Activated naive CD4-positive, alpha-beta T cell treated with anti-CD3 and anti-CD28 coated beads for 36 hours (primary cell): ENCODE measurements at regions of chr10 and their contacts with region 1.

Region 1: GRCh38 chr10:80472234-80473095 is 18.4 kb downstream of the TSPAN14 start:
- DNase-seq: peak; percentile 75
- H3K4me3 Mint-ChIP-seq: peak overlapping the region; percentile 36
- H3K27ac Mint-ChIP-seq: peak overlapping the region; percentile 98
- H3K4me1 Mint-ChIP-seq: peaks cover 87% of the 10 kb centered on the region
- H3K27me3 Mint-ChIP-seq: no peaks in the 10 kb centered on the region

Region 2: GRCh38 chr10:79203833-79204232 is 1268.6 kb before region 1 on chr10:
- CTCF ChIA-PET with region 1: no interaction called
- intact Hi-C with region 1: no loop called
- DNase-seq: no peak
- H3K4me3 Mint-ChIP-seq: no peak overlapping the region
- H3K27ac Mint-ChIP-seq: no peak overlapping the region
- H3K4me1 Mint-ChIP-seq: no peaks in the 10 kb centered on the region
- H3K27me3 Mint-ChIP-seq: no peaks in the 10 kb centered on the region

Region 3: GRCh38 chr10:79331709-79332108 is 1140.8 kb before region 1 on chr10:
- CTCF ChIA-PET with region 1: no interaction called
- intact Hi-C with region 1: loop called (anchors 10 kb)
- DNase-seq: peak; percentile 95
- H3K4me3 Mint-ChIP-seq: peak overlapping the region; percentile 28
- H3K27ac Mint-ChIP-seq: peak overlapping the region; percentile 93
- H3K4me1 Mint-ChIP-seq: peaks cover 43% of the 10 kb centered on the region
- H3K27me3 Mint-ChIP-seq: no peaks in the 10 kb centered on the region

Region 4: DNA sequence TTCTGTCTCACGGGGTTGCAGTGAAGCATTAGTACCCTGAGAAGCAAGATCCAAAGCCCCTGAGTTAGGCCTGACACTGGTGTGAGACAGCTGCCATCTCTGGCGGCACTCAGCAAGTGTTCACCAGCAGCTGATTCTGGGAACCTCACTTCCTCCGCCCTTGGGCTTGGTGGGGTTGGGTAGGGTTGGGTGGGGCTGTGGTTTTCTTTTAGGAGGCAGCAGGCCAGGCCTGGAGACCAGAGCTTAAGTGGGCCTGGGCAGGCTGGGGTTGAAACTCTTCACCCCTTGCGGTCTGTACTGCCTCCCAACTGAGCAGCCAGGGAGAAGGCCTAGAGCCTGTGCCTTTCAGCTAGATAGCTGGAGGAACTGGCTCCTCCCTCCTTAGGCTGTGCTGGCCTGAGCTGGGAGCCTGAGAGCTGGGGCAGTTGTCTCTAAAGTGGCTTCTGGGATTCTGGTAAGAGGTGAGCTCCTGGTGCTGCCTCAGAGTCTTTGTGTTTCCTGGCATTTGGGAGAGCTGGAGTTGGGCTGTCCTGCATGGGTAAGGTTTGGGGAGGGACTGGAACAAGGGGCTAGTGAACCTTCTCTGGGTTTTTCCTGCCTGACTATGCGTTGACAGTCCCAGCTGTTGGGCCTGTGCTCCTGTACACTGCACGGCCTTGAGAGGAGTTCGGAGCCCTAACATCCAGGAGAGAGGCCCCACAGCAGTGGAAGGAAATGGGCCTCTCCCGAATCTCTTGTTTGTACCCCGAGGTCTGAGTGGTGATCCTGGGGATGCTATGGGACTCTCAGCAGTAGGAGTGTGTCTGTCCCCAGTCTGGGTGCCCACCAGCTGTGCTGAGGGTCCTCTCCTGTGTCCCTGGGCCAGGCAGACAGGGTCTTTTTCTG is 13.2 kb before region 1 on chr10:
- CTCF ChIA-PET with region 1: interaction called, 74 read pairs
- intact Hi-C with region 1: loop called (anchors 1 kb)
- DNase-seq: peak; percentile 83
- H3K4me3 Mint-ChIP-seq: peak overlapping the region; percentile 76
- H3K27ac Mint-ChIP-seq: peak overlapping the region; percentile 93
- H3K4me1 Mint-ChIP-seq: peaks cover 82% of the 10 kb centered on the region
- H3K27me3 Mint-ChIP-seq: no peaks in the 10 kb centered on the region

Region 5: DNA sequence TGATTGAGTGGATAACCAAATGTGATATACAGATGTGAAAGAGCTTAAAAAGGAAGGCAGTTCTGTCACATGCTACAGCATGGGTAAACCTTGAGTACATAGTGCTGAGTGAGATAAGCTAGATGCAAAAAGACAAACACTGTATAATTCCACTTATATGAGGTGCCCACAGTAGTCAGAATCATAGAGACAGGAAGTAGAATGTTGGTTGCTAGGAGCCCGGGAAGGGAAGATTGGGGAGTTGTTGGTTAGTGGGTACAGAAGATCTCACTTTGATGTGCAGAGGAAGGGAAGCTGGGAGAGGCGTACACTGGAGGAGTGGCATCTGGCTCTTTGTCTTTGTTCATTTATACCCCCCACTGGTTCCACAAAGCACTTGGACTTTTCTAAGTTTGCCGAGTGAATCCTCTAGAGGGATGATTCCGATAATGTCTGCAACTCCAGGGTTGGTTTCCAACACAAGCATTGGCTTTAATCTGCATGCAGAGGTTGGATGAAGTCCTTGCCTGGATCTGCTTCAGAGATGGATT is 21.1 kb after region 1 on chr10:
- CTCF ChIA-PET with region 1: interaction called, 237 read pairs
- intact Hi-C with region 1: loop called (anchors 1 kb)
- DNase-seq: peak; percentile 49
- H3K4me3 Mint-ChIP-seq: peak overlapping the region; percentile 27
- H3K27ac Mint-ChIP-seq: peak overlapping the region; percentile 85
- H3K4me1 Mint-ChIP-seq: peaks cover 99% of the 10 kb centered on the region
- H3K27me3 Mint-ChIP-seq: no peaks in the 10 kb centered on the region

Region 6: DNA sequence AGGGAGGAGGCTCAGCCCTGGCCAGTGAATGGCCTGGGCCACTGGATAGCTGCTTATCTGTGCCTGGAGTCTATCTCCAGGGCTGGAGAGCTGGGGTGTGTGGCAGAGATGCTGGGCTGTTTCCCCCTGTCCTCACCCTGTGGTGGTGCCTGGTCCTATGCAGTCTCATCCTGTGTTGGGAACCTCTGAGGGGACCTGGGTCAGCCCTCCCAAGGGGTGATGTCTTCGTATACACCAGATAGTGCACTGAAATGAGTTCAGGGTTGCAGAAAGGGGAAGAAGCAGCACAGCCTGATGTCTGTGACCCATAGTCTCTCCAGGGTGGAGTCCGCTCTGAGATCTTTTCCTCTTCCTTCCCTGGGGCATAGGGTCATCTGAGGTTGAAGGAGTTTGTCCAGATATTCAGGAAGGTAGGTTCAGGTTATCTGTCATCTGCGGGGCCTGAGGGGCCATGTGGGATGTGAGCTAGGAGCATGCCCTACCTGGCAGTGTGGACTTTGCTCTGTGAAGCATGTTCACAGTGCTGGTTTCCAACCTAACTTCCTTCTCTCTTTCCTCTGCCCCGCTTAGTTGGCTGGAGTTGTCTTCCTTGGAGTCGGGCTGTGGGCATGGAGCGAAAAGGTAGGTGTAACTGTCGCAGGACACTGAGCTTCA is 31.8 kb after region 1 on chr10:
- CTCF ChIA-PET with region 1: interaction called, 237 read pairs
- intact Hi-C with region 1: loop called (anchors 1 kb)
- DNase-seq: no peak
- H3K4me3 Mint-ChIP-seq: no peak overlapping the region
- H3K27ac Mint-ChIP-seq: peak overlapping the region; percentile 54
- H3K4me1 Mint-ChIP-seq: peaks cover 64% of the 10 kb centered on the region
- H3K27me3 Mint-ChIP-seq: no peaks in the 10 kb centered on the region

Region 7: GRCh38 chr10:82041018-82041417 is 1568.6 kb after region 1 on chr10:
- CTCF ChIA-PET with region 1: no interaction called
- intact Hi-C with region 1: no loop called
- DNase-seq: no peak
- H3K4me3 Mint-ChIP-seq: no peak overlapping the region
- H3K27ac Mint-ChIP-seq: no peak overlapping the region
- H3K4me1 Mint-ChIP-seq: no peaks in the 10 kb centered on the region
- H3K27me3 Mint-ChIP-seq: no peaks in the 10 kb centered on the region